Mammary epithelial cell (primary cell): ENCODE measurements at regions of chr4 and their contacts with region 1.

Region 1: GRCh38 chr4:154551872-154552686 is 1.9 kb upstream of the PLRG1 start:
- DNase-seq: peak; percentile 61
- H3K4me3 ChIP-seq: no peak overlapping the region
- H3K27ac ChIP-seq: no peak overlapping the region
- H3K4me1 ChIP-seq: peaks cover 17% of the 10 kb centered on the region
- H3K27me3 ChIP-seq: no peaks in the 10 kb centered on the region
- CTCF ChIP-seq: peak; percentile 83 to 86

Region 2: GRCh38 chr4:154399259-154399974 is 152.7 kb before region 1 on chr4:
- CTCF ChIA-PET with region 1: no interaction called
- dilution Hi-C with region 1: no loop called
- in situ Hi-C with region 1: no loop called
- intact Hi-C with region 1: loop called (anchors 2 kb)
- DNase-seq: peak; percentile 19
- H3K4me3 ChIP-seq: peak overlapping the region in 1 of 3 experiments; percentile 12
- H3K27ac ChIP-seq: no peak overlapping the region
- H3K4me1 ChIP-seq: no peaks in the 10 kb centered on the region
- H3K27me3 ChIP-seq: no peaks in the 10 kb centered on the region
- CTCF ChIP-seq: peak; percentile 26 to 56

Region 3: DNA sequence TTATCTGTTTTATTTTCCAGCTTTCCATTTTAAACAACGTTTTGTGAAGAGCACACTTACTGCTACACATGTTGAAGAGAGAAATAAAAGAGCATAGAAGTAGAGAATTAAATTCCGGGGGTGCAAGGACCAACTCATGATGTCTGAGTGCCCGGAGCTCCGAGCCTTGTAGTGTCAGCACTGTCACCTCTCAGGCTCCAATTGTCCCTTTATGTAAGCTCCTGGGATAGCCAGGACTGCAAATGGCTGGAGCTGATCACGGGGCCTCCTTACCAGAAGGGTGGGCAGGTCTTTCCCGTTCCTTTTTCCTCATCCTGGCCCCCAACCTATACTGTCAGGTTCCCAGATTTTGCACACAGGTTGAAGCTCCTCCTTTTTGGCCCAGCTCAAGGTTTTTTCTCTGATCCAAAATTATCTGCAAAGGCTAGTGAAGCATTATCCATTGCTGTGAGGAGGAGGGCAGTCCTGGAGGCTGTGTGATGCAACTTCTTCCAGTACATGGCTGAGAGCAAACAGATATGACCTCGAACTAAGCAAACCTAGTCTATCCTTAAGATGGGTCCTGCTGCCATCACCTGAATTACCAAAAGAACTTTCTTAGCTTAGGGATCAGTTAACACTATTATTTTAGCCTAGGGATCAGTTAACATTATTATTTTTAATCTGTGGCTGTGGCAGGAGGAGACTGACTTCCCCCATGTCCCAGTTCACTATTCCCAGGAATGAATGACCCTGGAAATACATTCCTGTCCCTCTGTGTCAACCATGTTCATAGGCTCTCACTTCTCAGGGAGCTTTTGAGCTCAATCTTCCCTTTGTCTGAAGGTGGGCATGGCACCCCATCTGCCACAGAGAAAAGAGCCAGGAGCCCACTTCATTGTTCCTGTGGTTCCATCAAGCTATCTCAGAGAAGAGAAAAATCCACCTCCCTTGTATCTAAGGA is 60.7 kb after region 1 on chr4 and contains the start of gene FGG:
- CTCF ChIA-PET with region 1: no interaction called
- dilution Hi-C with region 1: loop called (anchors 5 kb)
- in situ Hi-C with region 1: loop called (anchors 5 kb)
- intact Hi-C with region 1: no loop called
- DNase-seq: no peak
- H3K4me3 ChIP-seq: no peak within 1 kb of the TSS
- H3K27ac ChIP-seq: no peak within 1 kb of the TSS
- H3K4me1 ChIP-seq: no peaks in the 10 kb centered on the region
- H3K27me3 ChIP-seq: no peaks in the 10 kb centered on the region
- CTCF ChIP-seq: no peak
- total RNA-seq, gene FGG: 0.66 TPM in 1 of 2 donors, not detected in the other

Region 4: GRCh38 chr4:154626793-154627484 is 74.9 kb after region 1 on chr4:
- CTCF ChIA-PET with region 1: interaction called, 13 read pairs
- dilution Hi-C with region 1: no loop called
- in situ Hi-C with region 1: no loop called
- intact Hi-C with region 1: loop called (anchors 1 kb)
- DNase-seq: peak; percentile 65
- H3K4me3 ChIP-seq: peak overlapping the region; percentile 27 to 51 (median 48)
- H3K27ac ChIP-seq: no peak overlapping the region
- H3K4me1 ChIP-seq: peaks cover 17% of the 10 kb centered on the region
- H3K27me3 ChIP-seq: no peaks in the 10 kb centered on the region
- CTCF ChIP-seq: peak; percentile 60 to 85

Region 5: DNA sequence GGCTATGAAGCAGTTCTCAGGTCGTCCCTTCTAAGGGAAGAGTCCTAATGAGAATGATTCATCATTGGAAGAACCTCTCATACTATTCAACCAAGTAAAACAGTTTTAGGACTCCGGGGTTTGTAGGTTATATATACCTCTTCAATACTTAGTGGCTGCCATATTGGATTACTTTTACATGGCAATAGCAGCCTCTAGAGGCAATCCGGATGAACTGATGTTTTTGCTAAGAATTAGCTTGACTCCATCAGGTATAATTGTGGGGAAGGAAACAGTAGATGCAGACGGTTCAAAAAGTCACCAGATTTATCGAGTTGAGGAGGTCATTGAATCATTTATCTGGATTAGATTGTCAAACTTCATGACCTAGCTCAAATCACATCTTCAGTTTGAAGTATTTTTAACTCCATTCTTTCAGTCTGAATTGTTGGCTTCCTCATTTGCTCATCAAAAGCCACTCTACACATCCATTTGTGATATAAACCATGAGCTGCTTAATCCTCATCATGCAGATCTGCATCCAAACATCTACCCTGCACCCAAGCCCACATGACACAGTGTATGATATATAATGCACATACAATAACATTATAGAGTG is 1235.1 kb after region 1 on chr4:
- CTCF ChIA-PET with region 1: no interaction called
- dilution Hi-C with region 1: no loop called
- in situ Hi-C with region 1: no loop called
- intact Hi-C with region 1: loop called (anchors 10 kb)
- DNase-seq: peak; percentile 51
- H3K4me3 ChIP-seq: no peak overlapping the region
- H3K27ac ChIP-seq: no peak overlapping the region
- H3K4me1 ChIP-seq: no peaks in the 10 kb centered on the region
- H3K27me3 ChIP-seq: no peaks in the 10 kb centered on the region
- CTCF ChIP-seq: peak; percentile 86 to 90

Region 6: GRCh38 chr4:156303708-156304107 is 1751.6 kb after region 1 on chr4:
- CTCF ChIA-PET with region 1: no interaction called
- dilution Hi-C with region 1: no loop called
- in situ Hi-C with region 1: no loop called
- intact Hi-C with region 1: no loop called
- DNase-seq: no peak
- H3K4me3 ChIP-seq: no peak overlapping the region
- H3K27ac ChIP-seq: no peak overlapping the region
- H3K4me1 ChIP-seq: no peaks in the 10 kb centered on the region
- H3K27me3 ChIP-seq: no peaks in the 10 kb centered on the region
- CTCF ChIP-seq: no peak